Breast epithelium (tissue), 4 donors: ENCODE measurements at regions of chr7 and their contacts with region 1.

Region 1: GRCh38 chr7:116588641-116589594 is 64.1 kb downstream of the CAV1 start:
- DNase-seq: no peak
- H3K4me3 ChIP-seq: no peak overlapping the region
- H3K27ac ChIP-seq: peak overlapping the region; percentile 46 to 53
- H3K4me1 ChIP-seq: peaks cover 0 to 4% of the 10 kb centered on the region in 2 donors
- H3K27me3 ChIP-seq: no peaks in the 10 kb centered on the region
- CTCF ChIP-seq: peak; percentile 73 to 81 (median 79)
- POLR2A ChIP-seq: no peak

Region 2: DNA sequence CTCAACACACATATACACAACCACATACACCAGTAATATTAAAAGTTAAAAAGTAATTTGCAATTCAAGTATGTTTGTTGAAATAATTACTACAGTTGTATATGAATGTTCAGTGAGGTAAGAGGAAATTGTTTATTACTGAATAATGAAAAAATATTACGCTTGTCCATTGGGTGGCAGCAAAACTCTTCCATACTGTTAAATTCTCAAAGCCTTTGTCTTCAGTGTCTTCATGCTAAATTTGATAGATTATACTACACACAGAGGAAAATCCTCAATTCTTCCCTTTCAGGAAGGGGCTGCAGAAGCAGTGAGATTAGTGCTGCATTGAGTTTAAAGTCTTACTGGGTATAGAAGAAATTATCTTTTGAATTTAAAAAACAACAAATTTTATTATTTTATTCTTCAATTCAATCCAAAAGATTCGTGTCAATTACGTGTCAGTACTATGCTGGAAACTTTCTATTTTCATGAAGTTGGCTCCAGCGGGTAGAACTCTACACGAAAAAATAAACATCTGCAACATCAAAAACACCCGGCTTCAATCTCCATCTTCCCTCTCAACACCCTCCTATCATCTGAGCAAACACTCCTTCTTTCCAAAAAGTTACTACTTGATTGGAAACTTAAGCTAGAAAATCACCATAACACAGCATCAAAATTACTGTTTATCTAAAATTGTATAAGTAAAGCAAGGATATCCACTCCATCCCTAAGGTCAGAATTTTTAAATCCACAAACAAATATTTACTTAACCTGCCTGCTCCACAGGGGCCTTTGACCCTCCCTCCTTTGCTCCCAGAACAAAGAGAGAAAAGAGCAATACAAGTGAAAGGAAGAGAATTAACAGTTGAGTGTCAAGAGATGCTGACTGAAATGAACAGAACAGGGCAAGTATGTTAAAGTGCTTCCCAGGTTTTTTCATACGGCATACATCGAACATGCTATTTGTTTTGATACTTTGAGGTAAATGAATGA is 415.6 kb before region 1 on chr7:
- intact Hi-C with region 1: loop called (anchors 10 kb)
- DNase-seq: no peak
- H3K4me3 ChIP-seq: no peak overlapping the region
- H3K27ac ChIP-seq: no peak overlapping the region
- H3K4me1 ChIP-seq: no peaks in the 10 kb centered on the region
- H3K27me3 ChIP-seq: no peaks in the 10 kb centered on the region
- CTCF ChIP-seq: peak; percentile 45 to 70 (median 66)
- POLR2A ChIP-seq: no peak

Region 3: GRCh38 chr7:116259871-116260440 is 329.0 kb before region 1 on chr7:
- intact Hi-C with region 1: loop called (anchors 10 kb)
- DNase-seq: no peak
- H3K4me3 ChIP-seq: no peak overlapping the region
- H3K27ac ChIP-seq: no peak overlapping the region
- H3K4me1 ChIP-seq: no peaks in the 10 kb centered on the region
- H3K27me3 ChIP-seq: no peaks in the 10 kb centered on the region
- CTCF ChIP-seq: no peak
- POLR2A ChIP-seq: no peak

Region 4: DNA sequence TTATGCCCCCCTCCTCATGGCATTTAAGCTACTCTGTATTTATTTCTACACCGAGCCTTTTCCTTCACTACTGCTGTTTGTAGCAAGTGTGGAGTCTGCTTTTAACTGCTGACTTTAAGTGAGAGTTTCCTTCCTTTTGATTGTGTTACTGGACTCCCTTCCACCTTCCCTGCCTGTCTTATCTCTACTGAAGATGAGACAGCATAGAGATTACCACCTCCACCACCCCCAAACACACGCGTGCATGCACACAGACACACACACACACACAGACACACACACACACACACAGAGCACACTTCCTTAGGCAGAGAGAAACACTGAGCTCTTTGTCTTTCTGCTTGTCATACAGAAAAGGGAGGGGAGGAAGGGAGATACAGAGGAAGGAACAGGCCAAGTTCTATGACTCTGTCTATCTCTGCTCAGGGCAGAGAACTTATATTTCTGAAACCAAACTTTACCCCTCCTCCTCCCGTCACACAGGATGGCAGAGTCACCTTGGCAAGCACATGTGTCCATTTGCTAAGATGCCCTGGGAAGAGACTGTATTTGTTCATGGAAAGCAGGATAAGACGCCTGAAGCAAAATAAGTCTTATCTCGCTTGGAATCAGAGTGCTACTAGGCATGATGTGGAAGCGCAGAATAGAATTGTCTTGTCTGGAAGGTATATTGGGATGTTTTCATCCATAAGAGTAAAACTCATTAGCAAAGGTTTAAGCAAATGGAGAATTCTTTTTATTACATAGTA is 171.2 kb before region 1 on chr7:
- intact Hi-C with region 1: no loop called
- DNase-seq: no peak
- H3K4me3 ChIP-seq: no peak overlapping the region
- H3K27ac ChIP-seq: no peak overlapping the region
- H3K4me1 ChIP-seq: no peaks in the 10 kb centered on the region
- H3K27me3 ChIP-seq: no peaks in the 10 kb centered on the region
- CTCF ChIP-seq: no peak
- POLR2A ChIP-seq: no peak

Region 5: DNA sequence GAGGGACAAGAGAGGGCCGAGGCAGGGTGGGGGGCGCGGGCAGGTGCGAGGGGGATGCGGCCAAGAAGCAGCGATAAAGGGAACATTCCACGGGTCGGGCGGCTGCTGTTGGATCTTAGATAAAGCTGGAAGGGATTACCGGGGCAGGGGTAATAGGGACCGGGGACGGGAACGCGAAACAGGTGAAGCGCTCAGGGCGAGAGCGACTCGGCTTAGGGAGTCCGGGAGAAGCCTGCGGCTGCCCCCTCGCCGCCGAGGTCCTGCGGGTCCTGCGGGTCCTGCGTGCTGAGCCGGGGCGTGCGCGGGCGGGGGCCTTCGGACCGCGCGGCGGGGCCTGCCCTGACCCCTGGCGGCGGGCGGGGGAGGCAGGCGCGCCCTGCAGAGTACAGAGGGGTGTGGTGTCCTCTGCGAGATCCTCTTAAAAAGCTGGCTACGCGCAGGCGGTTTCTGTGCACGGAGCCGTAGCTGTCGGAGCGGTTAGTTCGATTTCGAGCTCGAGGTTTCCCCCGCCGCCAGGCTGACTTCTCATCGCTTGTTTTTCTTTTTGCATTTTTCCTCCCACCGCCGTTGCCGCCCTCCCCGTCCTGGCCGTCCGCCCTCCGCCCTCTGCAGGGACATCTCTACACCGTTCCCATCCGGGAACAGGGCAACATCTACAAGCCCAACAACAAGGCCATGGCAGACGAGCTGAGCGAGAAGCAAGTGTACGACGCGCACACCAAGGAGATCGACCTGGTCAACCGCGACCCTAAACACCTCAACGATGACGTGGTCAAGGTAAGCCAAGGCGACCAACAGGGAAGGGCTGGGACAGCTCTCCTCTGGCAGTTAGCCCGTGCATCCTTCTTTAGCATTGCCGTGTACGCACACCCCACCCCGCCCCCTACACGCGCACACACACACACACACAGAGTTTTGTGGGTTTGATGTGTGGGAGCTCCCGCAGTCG is 62.7 kb before region 1 on chr7:
- intact Hi-C with region 1: loop called (anchors 10 kb)
- DNase-seq: peak; percentile 63 to 68
- H3K4me3 ChIP-seq: peak overlapping the region; percentile 66 to 82 (median 77)
- H3K27ac ChIP-seq: peak overlapping the region; percentile 87 to 92
- H3K4me1 ChIP-seq: no peaks in the 10 kb centered on the region
- H3K27me3 ChIP-seq: no peaks in the 10 kb centered on the region
- CTCF ChIP-seq: peak in 1 of 3 donors; percentile 88
- POLR2A ChIP-seq: no peak

Region 6: DNA sequence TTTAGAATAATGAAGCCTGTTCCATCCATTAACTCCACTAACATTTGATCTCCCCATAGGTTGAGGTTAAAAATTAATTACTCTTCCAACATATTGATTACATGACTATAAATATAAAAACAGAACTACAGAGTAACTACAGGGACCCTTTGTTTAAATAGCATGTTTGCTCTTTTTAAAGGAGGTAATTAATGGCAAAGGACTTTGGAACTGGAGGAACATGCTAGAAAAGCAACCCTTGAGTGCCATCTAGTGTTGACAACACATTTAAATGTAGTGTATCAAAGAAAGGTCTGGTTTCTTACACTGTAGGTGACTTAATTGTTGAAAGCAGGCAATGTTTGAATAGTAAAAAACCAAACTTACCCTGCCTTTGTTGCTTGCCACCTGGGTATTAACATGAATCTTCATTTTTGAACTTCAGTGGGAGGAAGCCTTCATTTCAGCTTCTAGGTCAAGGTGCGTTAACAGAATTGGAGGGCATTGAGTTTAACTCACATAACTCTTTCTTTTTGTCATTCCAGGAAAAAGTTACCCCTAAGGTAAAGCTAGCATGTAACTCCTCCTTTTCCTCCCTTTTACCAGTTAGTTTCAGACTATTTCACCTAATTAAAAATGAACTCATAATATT is 220.8 kb after region 1 on chr7:
- intact Hi-C with region 1: loop called (anchors 10 kb)
- DNase-seq: no peak
- H3K4me3 ChIP-seq: no peak overlapping the region
- H3K27ac ChIP-seq: no peak overlapping the region
- H3K4me1 ChIP-seq: no peaks in the 10 kb centered on the region
- H3K27me3 ChIP-seq: no peaks in the 10 kb centered on the region
- CTCF ChIP-seq: peak; percentile 27 to 78 (median 68)
- POLR2A ChIP-seq: no peak